Activated T-helper 1 cell treated with anti-CD3 and anti-CD28 coated beads, Interleukin-12 subunit alpha, Interleukin-12 subunit beta, Interleukin-2, Interleukin-4 antibody, amounts not matched to agents 30 ng/mL and 10 ng/mL and 1 ng/mL, durations not matched to agents 14 hours and 24 hours and 36 hours (primary cell): ENCODE measurements at regions of chr1 and their contacts with region 1.

Region 1: GRCh38 chr1:67853704-67854103 is 20.4 kb upstream of the GNG12 start:
- DNase-seq: no peak
- H3K4me3 Mint-ChIP-seq: no peak overlapping the region
- H3K27ac Mint-ChIP-seq: no peak overlapping the region
- H3K4me1 Mint-ChIP-seq: no peaks in the 10 kb centered on the region
- H3K27me3 Mint-ChIP-seq: peaks cover 9% of the 10 kb centered on the region

Region 2: GRCh38 chr1:67766141-67766978 is 87.3 kb before region 1 on chr1:
- intact Hi-C with region 1: loop called (anchors 1 kb)
- DNase-seq: no peak
- H3K4me3 Mint-ChIP-seq: no peak overlapping the region
- H3K27ac Mint-ChIP-seq: no peak overlapping the region
- H3K4me1 Mint-ChIP-seq: peaks cover 27% of the 10 kb centered on the region
- H3K27me3 Mint-ChIP-seq: peaks cover 34% of the 10 kb centered on the region

Region 3: DNA sequence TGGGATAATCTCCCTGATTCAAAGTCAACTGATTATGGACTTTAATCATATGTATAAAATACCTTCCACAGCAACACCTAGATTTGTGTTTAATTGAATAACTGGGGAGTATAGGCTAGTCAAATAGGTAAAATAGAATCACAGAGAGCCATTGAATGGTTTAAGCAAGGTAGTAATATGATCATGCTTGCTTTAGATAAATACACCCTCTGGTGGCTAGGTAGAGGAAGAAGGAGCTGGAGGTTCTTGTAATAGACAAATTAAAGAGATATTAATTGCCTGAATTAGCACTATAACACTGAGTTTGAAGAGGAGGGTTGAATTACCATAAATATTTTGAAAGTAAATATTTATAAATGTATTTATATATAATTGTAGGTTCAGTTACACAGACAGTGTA is 156.4 kb after region 1 on chr1:
- intact Hi-C with region 1: loop called (anchors 2 kb)
- DNase-seq: no peak
- H3K4me3 Mint-ChIP-seq: no peak overlapping the region
- H3K27ac Mint-ChIP-seq: no peak overlapping the region
- H3K4me1 Mint-ChIP-seq: no peaks in the 10 kb centered on the region
- H3K27me3 Mint-ChIP-seq: no peaks in the 10 kb centered on the region

Region 4: DNA sequence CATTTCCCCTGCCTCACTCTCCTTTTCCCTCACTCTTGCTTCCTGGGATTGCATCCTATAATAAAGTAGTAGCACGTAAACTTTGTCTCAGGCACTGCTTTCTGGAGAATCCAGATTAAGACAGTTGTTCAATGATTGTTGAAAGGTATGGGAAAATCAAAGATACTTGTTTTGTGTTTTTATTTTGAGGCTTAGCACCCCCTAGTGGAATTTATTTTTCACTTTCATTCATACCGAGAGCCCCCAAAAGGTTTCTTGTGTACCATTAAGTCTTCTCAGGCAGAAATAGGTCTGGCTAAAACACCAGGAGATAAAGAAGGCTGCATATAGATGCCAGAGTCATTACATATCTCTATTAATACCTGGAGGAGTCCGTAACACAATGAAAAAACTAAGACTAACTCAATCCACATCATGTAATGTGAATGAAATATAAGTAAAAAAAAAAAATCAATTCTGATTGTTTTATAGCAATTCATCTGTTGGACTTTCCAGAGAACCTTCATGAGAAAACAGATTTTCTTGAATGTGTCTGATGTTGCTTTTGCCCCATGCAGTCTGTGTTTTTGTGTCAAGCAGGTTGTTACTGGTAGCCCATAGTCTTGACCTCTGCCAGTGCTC is 492.6 kb after region 1 on chr1:
- intact Hi-C with region 1: loop called (anchors 10 kb)
- DNase-seq: no peak
- H3K4me3 Mint-ChIP-seq: no peak overlapping the region
- H3K27ac Mint-ChIP-seq: no peak overlapping the region
- H3K4me1 Mint-ChIP-seq: no peaks in the 10 kb centered on the region
- H3K27me3 Mint-ChIP-seq: no peaks in the 10 kb centered on the region

Region 5: GRCh38 chr1:69737527-69738185 is 1884.0 kb after region 1 on chr1:
- intact Hi-C with region 1: loop called (anchors 5 kb)
- DNase-seq: peak; percentile 6
- H3K4me3 Mint-ChIP-seq: no peak overlapping the region
- H3K27ac Mint-ChIP-seq: no peak overlapping the region
- H3K4me1 Mint-ChIP-seq: no peaks in the 10 kb centered on the region
- H3K27me3 Mint-ChIP-seq: no peaks in the 10 kb centered on the region